ENCODE measurements at regions of chr9 and their contacts with region 1.

Region 1: GRCh38 chr9:95167998-95168397 is 149.5 kb downstream of the FANCC start:
- DNase-seq: peak; percentile 79
- ATAC-seq: peak; percentile 85
- H3K4me3 Mint-ChIP-seq: no peak overlapping the region
- H3K27ac Mint-ChIP-seq: peak overlapping the region; percentile 54
- H3K4me1 Mint-ChIP-seq: peaks cover 33% of the 10 kb centered on the region
- H3K27me3 Mint-ChIP-seq: no peaks in the 10 kb centered on the region

Region 2: DNA sequence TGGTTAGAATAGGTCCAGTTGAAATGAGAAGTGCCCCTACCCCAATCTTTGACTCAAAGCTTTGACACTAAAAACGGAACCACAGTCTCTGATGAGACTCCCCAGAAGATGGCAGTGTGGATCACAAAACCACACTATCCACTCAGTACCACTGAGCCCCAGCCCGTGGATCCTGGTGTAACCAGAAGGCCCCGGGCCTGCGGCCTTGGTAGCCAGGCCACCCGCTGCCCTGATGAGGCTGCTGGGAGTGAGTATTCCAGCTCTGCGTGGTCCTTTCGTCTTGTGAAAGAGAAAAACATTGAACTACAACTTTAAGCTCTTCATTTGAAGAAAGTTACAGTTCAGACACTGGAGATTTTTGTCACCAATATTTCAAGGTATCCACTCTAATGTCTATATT is 486.5 kb before region 1 on chr9:
- CTCF ChIA-PET with region 1: interaction called, 22 read pairs
- DNase-seq: peak; percentile 66
- ATAC-seq: peak; percentile 68
- H3K4me3 Mint-ChIP-seq: no peak overlapping the region
- H3K27ac Mint-ChIP-seq: no peak overlapping the region
- H3K4me1 Mint-ChIP-seq: no peaks in the 10 kb centered on the region
- H3K27me3 Mint-ChIP-seq: peaks cover 57% of the 10 kb centered on the region

Region 3: GRCh38 chr9:95157481-95158151 is 10.4 kb before region 1 on chr9:
- CTCF ChIA-PET with region 1: interaction called, 16 read pairs
- DNase-seq: no peak
- ATAC-seq: no peak
- H3K4me3 Mint-ChIP-seq: no peak overlapping the region
- H3K27ac Mint-ChIP-seq: no peak overlapping the region
- H3K4me1 Mint-ChIP-seq: no peaks in the 10 kb centered on the region
- H3K27me3 Mint-ChIP-seq: no peaks in the 10 kb centered on the region

Measured in activated CD8-positive, alpha-beta memory T cell treated with anti-CD3 and anti-CD28 coated beads, Interleukin-2, amount 10 ng/mL, durations not matched to agents 7 days and 5 days (primary cell).